AG04449 (cell line): ENCODE measurements at regions of chr1 and their contacts with region 1.

Region 1: GRCh38 chr1:47262787-47263413 is 30.9 kb upstream of the TAL1 start:
- DNase-seq: no peak
- H3K4me3 ChIP-seq: no peak overlapping the region
- CTCF ChIP-seq: peak; percentile 58

Region 2: DNA sequence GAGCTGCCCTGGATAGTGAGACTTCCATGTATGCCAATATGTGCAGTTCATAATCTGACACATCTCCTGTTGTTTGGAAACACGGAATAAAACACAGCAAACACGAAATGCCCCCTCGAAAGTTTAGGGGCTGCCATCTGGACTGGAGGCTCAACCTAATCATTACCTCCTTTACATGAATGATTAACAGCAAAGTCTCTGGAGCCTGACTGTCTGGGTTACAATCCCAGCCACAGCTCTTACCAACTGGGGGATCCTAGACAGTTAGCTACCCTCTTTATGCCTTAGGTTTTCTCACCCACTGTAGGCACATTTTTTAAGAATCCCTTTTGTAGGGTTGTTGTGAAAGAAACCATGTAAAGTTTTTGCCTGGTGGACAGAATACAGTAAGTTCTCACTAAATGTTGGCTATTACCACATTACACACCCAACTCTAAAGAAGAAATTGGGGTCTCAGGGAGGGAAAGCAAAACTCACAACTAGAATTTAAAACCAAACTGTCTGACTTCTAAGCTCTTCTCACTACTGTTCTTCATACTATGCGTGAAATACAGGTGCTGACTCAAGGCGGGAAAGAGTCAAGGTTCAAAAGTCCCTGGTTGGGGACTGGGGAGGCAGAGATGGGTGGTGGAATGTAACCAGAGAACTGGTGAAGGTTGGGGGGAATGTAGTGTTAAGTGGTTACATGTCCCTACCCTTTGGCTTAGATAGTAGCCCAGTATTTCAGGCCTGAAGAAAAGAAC is 101.4 kb before region 1 on chr1:
- CTCF ChIA-PET with region 1: no interaction called
- POLR2A ChIA-PET with region 1: no interaction called
- DNase-seq: no peak
- H3K4me3 ChIP-seq: no peak overlapping the region
- CTCF ChIP-seq: no peak

Region 3: DNA sequence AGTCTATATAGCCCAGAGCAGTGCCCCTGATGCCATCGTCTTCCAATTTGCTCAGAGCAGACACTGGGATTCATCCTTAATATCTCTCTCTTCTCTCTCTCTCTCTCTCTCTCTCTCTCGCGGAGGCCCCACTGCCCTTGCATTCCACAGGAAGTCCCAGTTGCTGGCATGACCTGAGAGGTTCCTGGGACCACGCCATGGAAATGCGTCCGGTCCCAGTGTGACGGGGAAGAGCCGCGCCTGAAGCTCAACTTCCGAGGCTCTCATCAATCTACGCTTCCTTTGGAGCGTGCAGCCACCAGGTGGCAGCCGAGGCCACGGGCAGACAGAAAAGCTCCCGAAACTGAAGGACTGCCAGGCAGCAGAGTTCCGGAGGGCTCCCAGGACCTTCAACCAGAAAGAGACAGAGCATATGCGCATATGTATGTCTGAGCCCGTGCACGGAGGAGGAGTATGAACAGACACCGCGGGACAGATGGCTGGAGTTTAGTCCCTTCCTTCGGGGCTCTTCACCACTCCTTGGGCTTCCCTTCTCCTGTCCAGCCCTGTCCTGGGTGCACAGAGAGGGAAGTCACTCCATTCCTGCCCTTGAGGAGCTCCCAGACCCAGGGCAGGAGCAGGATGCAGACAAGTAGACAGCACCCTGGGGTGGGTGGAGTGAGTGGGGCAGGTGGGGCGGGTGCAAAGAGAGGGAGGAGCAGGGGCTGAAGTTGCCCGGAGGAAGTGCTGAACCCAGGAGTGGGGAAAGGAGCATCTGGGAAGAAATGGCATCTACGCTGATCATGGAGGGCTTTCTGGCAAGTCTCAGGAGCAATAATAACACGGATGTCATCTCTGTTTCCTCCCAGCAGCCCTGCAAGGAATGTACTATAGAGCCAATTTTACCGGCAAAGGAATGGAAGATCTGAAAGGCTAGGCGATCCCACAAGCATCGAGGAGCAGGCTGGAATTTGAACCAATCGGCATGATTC is 83.6 kb before region 1 on chr1:
- CTCF ChIA-PET with region 1: interaction called, 131 read pairs
- POLR2A ChIA-PET with region 1: no interaction called
- DNase-seq: peak; percentile 72
- H3K4me3 ChIP-seq: peak overlapping the region; percentile 60
- CTCF ChIP-seq: peak; percentile 97

Region 4: GRCh38 chr1:47201179-47201578 is 61.7 kb before region 1 on chr1:
- CTCF ChIA-PET with region 1: interaction called, 14 read pairs
- POLR2A ChIA-PET with region 1: no interaction called
- DNase-seq: no peak
- H3K4me3 ChIP-seq: no peak overlapping the region
- CTCF ChIP-seq: no peak

Region 5: DNA sequence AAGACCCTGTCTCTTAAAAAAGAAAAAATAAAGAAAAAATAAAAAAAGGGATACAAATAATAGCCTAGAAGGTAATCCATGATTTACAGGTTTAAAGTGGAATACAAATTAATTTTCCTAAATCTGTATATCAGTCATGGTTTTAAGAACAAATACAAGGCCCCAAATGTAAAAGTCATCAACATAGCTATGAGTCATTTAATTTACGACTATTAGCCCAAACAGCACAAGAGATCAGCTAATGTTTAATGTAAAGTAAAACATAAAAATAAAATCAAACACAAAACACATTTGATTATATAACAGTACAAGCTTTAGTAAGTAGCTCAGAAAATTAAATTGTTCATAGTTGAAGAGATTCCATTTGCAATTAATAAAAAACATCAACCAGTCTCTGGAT is 10.5 kb before region 1 on chr1:
- CTCF ChIA-PET with region 1: interaction called, 42 read pairs
- POLR2A ChIA-PET with region 1: no interaction called
- DNase-seq: no peak
- H3K4me3 ChIP-seq: no peak overlapping the region
- CTCF ChIP-seq: no peak

Region 6: GRCh38 chr1:47280157-47280556 is 17.3 kb after region 1 on chr1:
- CTCF ChIA-PET with region 1: interaction called, 16 read pairs
- POLR2A ChIA-PET with region 1: no interaction called
- DNase-seq: no peak
- H3K4me3 ChIP-seq: no peak overlapping the region
- CTCF ChIP-seq: no peak